Posterior vena cava (tissue), 2 donors: ENCODE measurements at regions of chr10 and their contacts with region 1.

Region 1: DNA sequence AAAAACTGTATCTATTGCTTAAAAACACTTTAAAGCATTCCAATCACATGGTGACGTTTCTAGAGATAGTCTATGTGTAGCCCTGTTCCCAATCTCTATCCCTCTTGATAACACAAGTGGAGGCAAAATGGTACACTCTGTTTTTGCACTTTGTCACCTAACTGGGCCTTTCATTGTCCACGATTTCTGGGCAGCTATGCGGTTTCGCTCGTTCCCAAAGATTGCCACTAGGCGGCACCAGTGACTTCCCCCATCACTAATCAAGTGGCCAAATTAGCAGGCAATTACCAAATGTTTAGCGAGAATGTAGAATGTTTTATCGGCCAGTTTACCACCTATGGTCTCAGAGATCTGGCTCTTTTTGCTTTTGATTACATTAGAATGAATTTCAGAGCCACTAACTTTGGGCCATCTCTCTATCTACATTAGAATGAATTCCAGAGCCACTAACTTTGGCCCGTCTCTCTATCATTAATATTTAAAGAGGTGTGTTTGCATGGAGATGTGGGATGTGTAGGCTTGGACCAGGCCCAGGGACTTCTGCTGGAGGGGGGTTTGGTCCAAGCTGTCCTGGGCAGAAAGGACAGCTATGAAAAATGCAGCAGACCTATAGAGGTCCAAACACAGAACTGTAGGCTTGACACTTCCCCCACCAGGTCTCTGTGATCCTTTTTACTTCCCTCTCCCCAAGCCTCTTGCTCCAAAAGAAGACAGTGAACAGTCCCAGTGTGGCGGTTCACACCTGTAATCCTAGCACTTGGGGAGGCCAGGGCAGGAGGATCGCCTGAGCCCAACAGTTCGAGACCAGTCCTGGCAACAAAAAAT is 90.1 kb downstream of the EPC1 start:
- DNase-seq: no peak

Region 2: GRCh38 chr10:30671026-30671616 is 1585.7 kb before region 1 on chr10:
- intact Hi-C with region 1: no loop called
- DNase-seq: no peak

Region 3: GRCh38 chr10:32346134-32346550 is 89.3 kb after region 1 on chr10:
- intact Hi-C with region 1: loop called (anchors 5 to 10 kb)
- DNase-seq: peak; percentile 99

Region 4: DNA sequence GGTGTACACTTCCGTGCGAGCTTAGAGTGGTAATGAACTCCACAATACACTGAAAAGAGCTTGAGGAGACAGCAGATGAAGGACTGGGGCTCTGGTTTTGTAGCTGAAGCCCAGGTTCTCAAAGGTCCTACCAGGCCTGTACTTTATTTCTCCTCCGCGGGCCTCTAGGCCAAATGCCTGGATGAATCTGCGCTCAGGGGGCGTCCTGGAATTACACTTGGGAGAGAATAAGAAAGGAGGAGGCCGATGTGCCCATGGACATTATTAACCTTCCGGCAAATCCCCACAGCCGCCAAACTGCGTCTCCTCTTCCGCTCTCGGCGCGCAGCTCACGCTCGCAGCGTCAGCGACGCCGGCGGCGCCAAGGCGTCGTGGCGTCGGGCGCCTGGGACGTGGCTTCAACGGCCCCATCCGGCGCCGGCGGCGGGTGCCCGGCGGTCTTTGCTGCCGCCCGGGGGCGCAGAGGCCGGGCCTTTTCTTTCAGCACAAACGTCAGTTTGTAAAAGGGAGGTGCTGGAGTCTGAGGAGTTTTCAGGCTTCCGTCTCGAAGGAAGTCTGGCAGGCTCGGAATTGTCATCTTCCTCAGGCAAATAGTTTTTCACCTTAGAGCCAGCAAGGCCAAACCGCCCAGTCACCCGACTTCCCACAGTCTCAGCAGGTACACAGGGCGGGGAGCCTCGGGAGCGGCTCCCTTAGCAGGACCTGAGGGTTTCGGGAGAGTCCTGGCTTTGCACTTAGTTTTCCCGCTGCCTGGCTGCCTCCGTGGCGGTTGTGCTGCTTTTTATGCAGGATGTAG is 189.1 kb after region 1 on chr10 and contains the start of gene CCDC7:
- intact Hi-C with region 1: loop called in 1 of 2 experiments (anchors 10 kb)
- DNase-seq: peak; percentile 96
- total RNA-seq, gene CCDC7: 32.1 to 46.4 TPM